A549 (cell line): ENCODE measurements at regions of chr7 and their contacts with region 1.

Region 1: DNA sequence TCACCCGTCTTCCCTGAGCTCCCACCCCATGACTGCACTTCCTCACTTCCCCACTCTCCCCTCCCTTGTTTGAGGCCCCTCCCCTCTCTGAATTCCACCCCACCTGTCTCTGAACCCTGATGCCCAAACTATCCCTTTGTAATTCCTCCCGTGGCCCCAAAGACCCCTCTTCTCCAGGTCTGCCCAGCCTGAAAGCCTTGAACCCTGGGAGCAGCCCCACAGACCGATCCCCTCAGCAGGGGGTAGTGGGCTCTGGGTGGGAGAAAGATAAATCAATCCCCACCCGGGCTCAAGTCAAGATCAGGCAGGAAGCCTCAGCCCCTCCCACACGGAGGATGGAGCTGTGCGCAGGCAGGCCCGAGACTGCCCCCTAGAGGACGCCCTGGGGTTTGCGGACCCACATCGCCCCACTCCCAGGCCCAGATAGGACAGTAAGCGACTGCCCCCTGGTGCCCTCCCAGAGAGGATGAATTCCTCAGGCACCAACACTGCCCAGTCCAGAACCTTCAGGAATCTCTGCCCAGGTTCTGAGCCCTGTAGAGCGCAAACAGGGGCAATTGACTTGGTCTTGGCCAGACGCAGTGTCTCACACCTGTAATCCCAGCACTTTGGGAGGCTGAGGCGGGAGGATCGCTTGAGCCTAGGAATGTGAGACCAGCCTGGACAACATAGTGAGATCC is 11.7 kb downstream of the HSPB1 start:
- DNase-seq: peak; percentile 92 to 95
- ATAC-seq: peak; percentile 40 to 67
- H3K4me3 ChIP-seq: no peak overlapping the region
- H3K27ac ChIP-seq: peak overlapping the region; percentile 76 to 83
- H3K4me1 ChIP-seq: peaks cover 27% of the 10 kb centered on the region
- CTCF ChIP-seq: peak; percentile 100
- EP300 ChIP-seq: no peak
- POLR2A ChIP-seq: no peak
- RAD21 ChIP-seq: peak; percentile 100

Region 2: DNA sequence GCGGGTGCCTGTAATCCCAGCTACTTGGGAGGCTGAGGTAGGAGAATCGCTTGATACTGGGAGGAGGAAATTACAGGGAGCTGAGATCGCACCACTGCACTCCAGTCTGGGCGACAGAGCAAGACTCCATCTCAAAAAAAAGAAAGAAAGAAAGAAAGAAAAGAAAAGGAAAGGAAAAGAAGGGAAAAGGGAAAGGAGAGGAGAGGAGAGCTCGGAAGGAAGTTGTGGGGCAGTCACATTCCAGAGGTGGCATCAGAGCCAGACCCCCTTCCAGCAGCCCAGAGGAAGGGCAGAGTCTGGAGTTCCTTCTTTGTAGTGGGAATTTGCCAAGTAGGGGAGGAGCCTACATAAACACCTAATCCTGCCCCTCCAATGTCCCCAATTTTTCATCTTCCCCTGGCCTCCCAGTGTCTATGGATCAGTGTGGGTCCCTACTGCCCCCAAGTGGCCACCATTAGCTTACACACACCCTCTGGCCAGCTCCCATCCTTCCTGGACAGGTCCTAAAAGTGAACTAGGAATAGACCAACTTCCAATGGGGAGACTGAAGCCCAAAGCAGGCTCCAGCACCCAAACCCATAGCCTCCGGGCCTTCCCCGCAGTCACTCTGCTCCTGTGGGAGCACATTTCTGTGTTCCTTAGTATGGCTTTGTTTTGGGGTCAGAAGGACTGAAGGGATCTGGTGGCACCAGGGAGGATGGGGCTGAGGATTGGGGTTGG is 51.3 kb before region 1 on chr7:
- CTCF ChIA-PET with region 1: interaction called, 75 read pairs
- POLR2A ChIA-PET with region 1: no interaction called
- DNase-seq: peak; percentile 66 to 85
- ATAC-seq: peak; percentile 79 to 88
- H3K4me3 ChIP-seq: no peak overlapping the region
- H3K27ac ChIP-seq: no peak overlapping the region
- H3K4me1 ChIP-seq: peaks cover 7% of the 10 kb centered on the region; the same call in 2 of the 3 replicates
- CTCF ChIP-seq: peak; percentile 81
- EP300 ChIP-seq: no peak
- POLR2A ChIP-seq: no peak
- RAD21 ChIP-seq: peak; percentile 83 to 92

Region 3: DNA sequence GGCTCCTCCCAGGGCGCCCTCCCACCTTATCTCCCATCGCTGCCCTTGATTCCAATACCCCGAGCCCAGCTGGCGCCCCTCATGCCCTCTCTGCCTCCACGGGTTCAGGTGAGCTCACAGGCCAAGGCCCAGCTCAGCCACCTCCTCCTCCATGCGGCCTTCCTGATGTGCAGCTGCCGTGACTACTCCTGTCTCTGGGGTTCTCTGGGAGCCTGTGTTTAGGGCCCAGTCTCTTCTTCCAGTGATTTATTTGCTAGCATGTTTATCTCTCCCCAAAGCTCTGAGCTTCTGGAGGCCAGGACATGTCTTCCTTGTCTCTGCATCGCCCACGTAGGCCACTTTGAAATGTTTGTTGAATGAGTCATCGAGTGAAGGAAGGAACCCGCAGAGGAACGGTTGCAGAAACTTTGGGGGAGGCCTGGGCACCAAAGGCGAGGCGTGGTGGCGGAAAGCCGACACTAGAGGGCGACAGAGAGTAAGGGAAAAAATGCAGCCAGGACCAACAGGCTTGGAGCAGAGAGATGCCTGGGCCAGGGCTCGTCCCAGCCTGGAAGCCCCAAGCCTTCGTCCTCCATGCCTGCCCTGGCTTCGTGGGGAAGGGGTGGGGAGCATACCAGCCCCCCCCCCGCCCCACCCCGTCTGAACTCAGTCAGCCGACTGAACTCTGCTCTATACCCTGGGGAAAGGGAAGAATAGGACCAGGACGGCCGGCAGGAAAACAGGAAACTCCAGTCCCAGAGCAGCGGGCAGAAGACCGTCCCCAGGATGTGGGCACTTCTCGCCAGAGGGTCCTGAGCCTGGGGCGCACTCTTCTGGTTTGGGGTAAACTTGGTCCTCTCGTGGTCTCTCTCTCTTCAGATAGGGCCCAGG is 22.6 kb before region 1 on chr7:
- CTCF ChIA-PET with region 1: interaction called, 764 read pairs
- POLR2A ChIA-PET with region 1: interaction called, 12 read pairs
- DNase-seq: peak; percentile 91 to 96
- ATAC-seq: peak; percentile 78 to 84
- H3K4me3 ChIP-seq: peak overlapping the region; percentile 37
- H3K27ac ChIP-seq: peak overlapping the region; percentile 92 to 97
- H3K4me1 ChIP-seq: peaks cover 49% of the 10 kb centered on the region
- CTCF ChIP-seq: peak; percentile 96
- EP300 ChIP-seq: no peak
- POLR2A ChIP-seq: peak; percentile 48
- RAD21 ChIP-seq: peak; percentile 96 to 98

Region 4: GRCh38 chr7:76333511-76334101 is 19.4 kb after region 1 on chr7:
- CTCF ChIA-PET with region 1: interaction called, 86 read pairs
- POLR2A ChIA-PET with region 1: interaction called, 4 read pairs
- DNase-seq: no peak
- ATAC-seq: 0 out of 6 replicates have a peak, but pooled peaks of 1 of the 2 experiments have one; percentile 27
- H3K4me3 ChIP-seq: no peak overlapping the region
- H3K27ac ChIP-seq: peak overlapping the region; percentile 0 to 9; a peak in 2 of 6 replicates
- H3K4me1 ChIP-seq: peaks cover 59% of the 10 kb centered on the region
- CTCF ChIP-seq: no peak
- EP300 ChIP-seq: no peak
- POLR2A ChIP-seq: no peak
- RAD21 ChIP-seq: no peak